ENCODE measurements at regions of chr10 and their contacts with region 1.

Region 1: DNA sequence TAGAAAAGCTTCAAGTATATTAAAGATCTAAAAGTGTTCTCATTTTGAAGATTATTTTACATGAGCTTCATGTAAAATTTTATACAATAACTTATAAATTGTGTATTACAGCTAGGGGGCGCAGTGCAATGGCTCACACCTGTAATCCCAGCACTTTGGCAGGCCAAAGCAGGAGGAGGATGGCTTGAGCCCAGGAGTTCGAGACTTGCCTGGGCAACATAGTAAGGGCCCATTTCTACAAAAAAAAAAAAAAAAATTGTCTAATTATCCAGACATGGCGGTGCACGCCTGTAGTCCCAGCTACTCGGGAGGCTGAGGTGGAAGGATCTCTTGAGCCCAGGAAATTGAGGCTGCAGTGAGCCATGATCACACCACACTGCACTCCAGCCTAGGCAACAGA is 16.6 kb downstream of the ACBD5 start:
- DNase-seq: peak; percentile 55
- H3K4me3 Mint-ChIP-seq: no peak overlapping the region
- H3K27ac Mint-ChIP-seq: no peak overlapping the region
- H3K4me1 Mint-ChIP-seq: no peaks in the 10 kb centered on the region
- H3K27me3 Mint-ChIP-seq: no peaks in the 10 kb centered on the region
- CTCF ChIP-seq: peak; percentile 31

Region 2: DNA sequence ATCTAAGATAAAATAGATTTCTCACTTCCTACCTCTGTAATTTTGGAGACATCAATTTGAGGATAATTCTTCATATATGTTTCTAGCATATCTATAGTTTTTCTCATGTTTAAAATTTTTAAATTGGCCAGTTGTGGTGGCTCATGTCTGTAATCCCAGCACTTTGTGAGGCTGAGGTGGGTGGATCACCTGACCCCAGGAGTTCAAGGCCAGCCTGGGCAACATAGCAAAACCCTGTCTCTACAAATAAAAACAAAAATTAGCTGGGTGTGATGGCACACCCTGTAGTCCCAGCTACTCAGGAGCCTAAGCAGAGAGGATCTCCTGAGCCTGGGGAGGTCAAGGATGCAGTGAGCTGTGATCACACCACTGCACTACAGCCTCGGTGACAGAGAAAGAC is 11.7 kb after region 1 on chr10:
- CTCF ChIA-PET with region 1: interaction called, 17 read pairs
- POLR2A ChIA-PET with region 1: interaction called, 3 read pairs
- intact Hi-C with region 1: no loop called
- DNase-seq: no peak
- H3K4me3 Mint-ChIP-seq: no peak overlapping the region
- H3K27ac Mint-ChIP-seq: no peak overlapping the region
- H3K4me1 Mint-ChIP-seq: no peaks in the 10 kb centered on the region
- H3K27me3 Mint-ChIP-seq: no peaks in the 10 kb centered on the region
- CTCF ChIP-seq: no peak

Region 3: GRCh38 chr10:27312854-27313253 is 88.9 kb after region 1 on chr10:
- CTCF ChIA-PET with region 1: no interaction called
- POLR2A ChIA-PET with region 1: no interaction called
- intact Hi-C with region 1: no loop called
- DNase-seq: no peak
- H3K4me3 Mint-ChIP-seq: no peak overlapping the region
- H3K27ac Mint-ChIP-seq: no peak overlapping the region
- H3K4me1 Mint-ChIP-seq: peaks cover 7% of the 10 kb centered on the region
- H3K27me3 Mint-ChIP-seq: no peaks in the 10 kb centered on the region
- CTCF ChIP-seq: no peak

Measured in MCF 10A (cell line).